ENCODE measurements at regions of chr5 and their contacts with region 1.

Region 1: GRCh38 chr5:126354012-126354857 is 69.0 kb upstream of the GRAMD2B start:
- DNase-seq: no peak
- H3K4me3 ChIP-seq: no peak overlapping the region
- H3K27ac ChIP-seq: peak overlapping the region; percentile 47 to 71
- H3K4me1 ChIP-seq: no peaks in the 10 kb centered on the region
- H3K27me3 ChIP-seq: no peaks in the 10 kb centered on the region
- CTCF ChIP-seq: peak; percentile 58 to 86 (median 72)
- POLR2A ChIP-seq: no peak

Region 2: GRCh38 chr5:126422989-126423788 is 69.0 kb after region 1 on chr5 and contains the start of gene GRAMD2B:
- intact Hi-C with region 1: loop called (anchors 10 kb)
- DNase-seq: peak; percentile 87 to 90
- H3K4me3 ChIP-seq: peak within 1 kb of the TSS; percentile 53 to 87
- H3K27ac ChIP-seq: peak within 1 kb of the TSS; percentile 91 to 98
- H3K4me1 ChIP-seq: peaks cover 0 to 4% of the 10 kb centered on the region in 2 donors
- H3K27me3 ChIP-seq: no peaks in the 10 kb centered on the region
- CTCF ChIP-seq: peak in 2 of 4 experiments; percentile 5 to 14
- POLR2A ChIP-seq: peak; percentile 87 to 95
- total RNA-seq, gene GRAMD2B: 34.0 to 91.5 (median 58.8) TPM

Region 3: DNA sequence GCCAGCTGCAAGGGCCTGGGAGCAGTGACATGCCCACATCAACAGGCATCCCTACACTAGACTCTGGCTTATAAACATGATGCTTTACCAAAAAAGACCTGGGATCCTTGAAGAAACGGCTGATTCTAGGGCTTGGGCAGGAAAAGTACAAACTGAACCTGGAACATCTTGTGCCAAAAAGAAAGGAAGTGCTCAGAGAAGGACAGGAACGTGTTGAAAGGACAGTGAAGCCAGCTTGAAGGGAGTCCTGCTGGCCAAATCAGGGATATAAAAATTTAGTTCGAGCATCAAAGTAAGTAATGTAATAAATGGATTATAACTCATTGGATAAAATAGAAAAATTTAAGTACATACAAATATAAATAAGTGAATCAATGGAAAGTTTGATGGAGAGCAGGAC is 182.6 kb after region 1 on chr5:
- intact Hi-C with region 1: loop called (anchors 5 kb)
- DNase-seq: no peak
- H3K4me3 ChIP-seq: no peak overlapping the region
- H3K27ac ChIP-seq: peak overlapping the region; percentile 20 to 34
- H3K4me1 ChIP-seq: peaks cover 5 to 6% of the 10 kb centered on the region in 2 donors
- H3K27me3 ChIP-seq: no peaks in the 10 kb centered on the region
- CTCF ChIP-seq: peak in 1 of 4 experiments; percentile 8
- POLR2A ChIP-seq: no peak

Measured in uterus (tissue), 4 donors.